Esophagus squamous epithelium (tissue), 5 donors: ENCODE measurements at regions of chr17 and their contacts with region 1.

Region 1: DNA sequence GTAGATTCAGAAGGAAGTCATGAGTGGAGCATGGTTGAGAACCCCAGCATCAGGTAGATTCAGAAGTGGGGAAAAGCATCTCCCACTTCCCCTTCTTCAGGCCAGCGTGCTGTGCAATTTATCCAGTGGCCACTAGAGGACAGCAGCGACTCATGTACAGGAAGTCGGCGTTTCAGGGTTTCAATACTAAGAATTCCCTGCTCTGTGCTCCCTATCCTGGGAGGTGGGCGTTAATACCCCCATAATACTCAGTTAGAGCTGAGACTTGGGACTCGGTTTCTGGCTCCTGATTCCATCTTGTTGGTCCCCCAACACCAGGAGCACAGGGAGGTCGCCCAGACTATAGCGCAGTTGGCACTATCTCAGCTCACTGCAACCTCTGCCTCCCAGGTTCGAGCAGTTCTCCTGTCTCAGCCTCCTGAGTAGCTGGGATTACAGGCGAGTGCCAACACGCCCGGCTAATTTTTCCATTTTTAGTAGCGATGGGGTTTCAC is 75.3 kb upstream of the AMZ2 start:
- DNase-seq: peak; percentile 26
- H3K4me3 ChIP-seq: no peak overlapping the region
- H3K27ac ChIP-seq: no peak overlapping the region
- H3K4me1 ChIP-seq: peaks cover 0 to 5% (median 0%) of the 10 kb centered on the region in 3 donors
- H3K27me3 ChIP-seq: peaks cover 0 to 4% (median 0%) of the 10 kb centered on the region in 4 donors
- CTCF ChIP-seq: peak; percentile 92 to 98 (median 95)
- POLR2A ChIP-seq: no peak

Region 2: DNA sequence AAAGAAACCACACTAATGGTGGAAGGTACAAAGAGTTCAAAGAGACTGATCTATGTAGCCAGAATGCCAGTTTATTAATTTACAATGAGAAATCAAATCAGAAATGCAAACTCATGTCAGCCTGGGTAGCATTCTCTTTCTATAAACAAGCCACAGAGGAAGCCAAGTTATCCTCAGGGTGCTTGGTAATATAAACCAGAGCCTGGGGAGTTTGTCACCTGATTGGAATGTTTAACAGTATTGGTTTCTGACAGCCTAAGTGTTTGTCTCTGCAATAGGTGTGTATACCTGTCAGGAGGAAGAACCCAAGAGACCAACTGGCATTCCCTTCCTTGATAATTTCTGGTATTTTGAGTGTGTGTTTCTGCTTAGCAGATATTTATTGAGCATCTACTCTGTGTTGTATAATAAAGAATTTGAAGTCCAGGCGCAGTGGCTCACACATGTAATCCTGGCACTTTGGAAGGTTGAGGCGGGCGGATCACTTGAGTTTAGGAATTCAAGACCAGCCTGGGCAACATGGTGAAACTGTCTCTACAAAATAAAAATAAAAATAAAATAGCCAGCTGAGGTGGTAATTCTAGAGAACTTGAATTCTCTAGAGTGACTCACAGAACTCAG is 173.1 kb before region 1 on chr17:
- intact Hi-C with region 1: no loop called
- DNase-seq: no peak
- H3K4me3 ChIP-seq: no peak overlapping the region
- H3K27ac ChIP-seq: no peak overlapping the region
- H3K4me1 ChIP-seq: peaks cover 6 to 23% (median 17%) of the 10 kb centered on the region in 3 donors
- H3K27me3 ChIP-seq: no peaks in the 10 kb centered on the region
- CTCF ChIP-seq: no peak
- POLR2A ChIP-seq: no peak

Region 3: DNA sequence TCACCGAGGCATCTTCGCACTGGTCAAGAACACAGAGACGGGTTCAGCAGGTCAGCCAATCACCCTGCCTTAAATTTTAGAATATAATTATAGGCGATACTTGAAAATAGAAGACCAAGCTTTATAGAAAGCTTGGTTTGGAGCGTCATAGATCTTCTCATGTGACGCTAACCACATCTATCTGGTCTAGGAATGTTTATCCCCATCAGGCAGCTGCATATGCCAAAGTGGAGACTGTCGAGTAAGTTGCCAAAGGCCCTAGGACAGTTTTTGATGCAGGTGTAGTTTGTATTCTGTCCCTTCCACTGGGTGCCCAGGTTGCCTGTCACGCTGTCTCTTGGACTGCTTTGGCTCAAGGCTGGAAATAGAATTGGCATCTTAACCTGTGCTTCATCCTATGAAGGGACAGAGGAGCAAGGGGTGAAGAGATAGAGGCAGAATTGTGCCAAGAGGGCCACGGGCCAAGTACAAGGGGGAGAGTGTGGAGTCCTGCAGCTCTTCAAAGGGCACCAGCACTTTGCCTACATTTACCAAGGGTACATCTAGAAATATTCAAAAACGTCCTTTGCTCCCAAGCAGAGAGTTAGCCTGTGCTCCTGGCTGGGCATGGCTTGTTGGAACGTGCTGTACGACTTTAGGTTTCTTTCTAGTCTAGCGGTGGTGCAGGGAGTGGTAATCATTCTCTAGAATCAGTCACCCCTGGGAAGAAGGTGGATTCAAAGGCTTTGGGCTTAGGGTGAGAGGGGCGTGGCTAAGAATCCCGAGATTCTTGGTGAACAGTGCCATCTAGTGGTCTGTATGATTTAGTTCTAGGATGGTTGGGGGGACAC is 290.1 kb after region 1 on chr17:
- intact Hi-C with region 1: loop called (anchors 10 kb)
- DNase-seq: no peak
- H3K4me3 ChIP-seq: no peak overlapping the region
- H3K27ac ChIP-seq: peak overlapping the region in 2 of 4 donors; percentile 15 to 68
- H3K4me1 ChIP-seq: peaks cover 4 to 49% (median 21%) of the 10 kb centered on the region in 3 donors
- H3K27me3 ChIP-seq: no peaks in the 10 kb centered on the region
- CTCF ChIP-seq: peak in 5 of 6 experiments; percentile 70 to 88 (median 74)
- POLR2A ChIP-seq: peak in 1 of 4 donors; percentile 34